ENCODE measurements at regions of chr6 and their contacts with region 1.

Region 1: DNA sequence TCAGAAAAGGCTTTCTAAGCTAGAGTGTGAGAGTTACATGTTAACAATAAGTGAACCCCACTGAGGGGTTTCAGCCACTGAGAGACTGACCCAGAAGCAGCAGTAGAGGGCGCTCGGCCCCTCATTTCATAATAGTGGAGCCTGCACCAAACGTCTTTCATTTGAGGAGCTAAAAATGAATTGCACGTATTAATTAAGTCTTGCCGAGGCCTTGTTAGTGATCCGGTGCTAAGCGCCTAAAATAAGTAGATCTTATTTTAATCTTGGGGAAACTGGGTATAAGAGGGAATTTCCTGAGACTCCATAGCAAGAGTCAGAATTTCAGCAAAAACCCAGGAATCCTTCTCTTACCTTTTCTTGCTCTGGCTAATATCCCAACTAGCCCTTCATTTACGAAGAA is 209.7 kb downstream of the FARS2 start:
- DNase-seq: peak; percentile 75
- ATAC-seq: peak; percentile 85
- H3K4me3 Mint-ChIP-seq: no peak overlapping the region
- H3K27ac Mint-ChIP-seq: no peak overlapping the region
- H3K4me1 Mint-ChIP-seq: no peaks in the 10 kb centered on the region
- H3K27me3 Mint-ChIP-seq: no peaks in the 10 kb centered on the region

Region 2: GRCh38 chr6:5435449-5435848 is 35.6 kb before region 1 on chr6:
- CTCF ChIA-PET with region 1: no interaction called
- POLR2A ChIA-PET with region 1: no interaction called
- DNase-seq: no peak
- ATAC-seq: no peak
- H3K4me3 Mint-ChIP-seq: no peak overlapping the region
- H3K27ac Mint-ChIP-seq: no peak overlapping the region
- H3K4me1 Mint-ChIP-seq: no peaks in the 10 kb centered on the region
- H3K27me3 Mint-ChIP-seq: no peaks in the 10 kb centered on the region

Region 3: DNA sequence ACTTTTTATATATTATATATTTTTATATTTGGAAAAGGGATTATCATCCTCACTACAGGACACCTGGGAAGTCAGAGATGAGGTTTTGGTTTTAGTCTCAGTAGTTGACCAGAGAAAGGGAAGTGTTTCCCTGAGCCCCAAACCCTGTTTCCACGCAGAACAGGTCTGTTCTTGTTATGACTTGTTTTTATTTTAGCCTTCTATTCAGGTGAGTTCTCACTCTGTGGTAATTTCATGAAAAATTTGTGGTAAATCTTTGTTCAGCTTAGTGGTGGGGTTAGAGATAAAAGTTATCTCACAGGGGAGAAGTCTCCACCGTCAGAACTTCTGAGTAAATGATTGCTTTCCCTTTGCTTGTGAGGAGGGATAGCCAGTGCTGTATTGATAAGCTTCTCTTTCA is 15.2 kb after region 1 on chr6:
- CTCF ChIA-PET with region 1: interaction called, 10 read pairs
- POLR2A ChIA-PET with region 1: interaction called, 3 read pairs
- DNase-seq: no peak
- ATAC-seq: no peak
- H3K4me3 Mint-ChIP-seq: no peak overlapping the region
- H3K27ac Mint-ChIP-seq: no peak overlapping the region
- H3K4me1 Mint-ChIP-seq: peaks cover 11% of the 10 kb centered on the region
- H3K27me3 Mint-ChIP-seq: no peaks in the 10 kb centered on the region

Region 4: DNA sequence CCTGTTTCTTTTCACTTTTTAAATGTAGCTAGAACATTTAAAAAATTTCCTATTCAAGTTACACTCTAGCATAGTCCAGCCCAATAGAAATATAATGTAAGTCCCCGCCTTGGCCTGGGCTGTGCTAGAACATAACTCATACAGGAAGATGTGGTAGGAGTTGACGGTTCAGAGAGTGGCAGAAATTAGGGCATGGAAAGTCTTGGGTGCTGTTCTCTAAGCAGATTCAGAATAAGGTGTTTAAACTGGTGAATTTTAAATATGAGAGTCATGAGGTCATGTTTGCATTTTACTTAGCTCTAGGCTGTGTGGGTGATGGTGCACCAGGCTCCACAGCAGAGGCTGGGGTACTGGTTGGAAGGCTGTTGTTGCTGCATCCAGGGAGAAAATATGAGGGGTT is 46.8 kb after region 1 on chr6:
- CTCF ChIA-PET with region 1: interaction called, 11 read pairs
- POLR2A ChIA-PET with region 1: no interaction called
- DNase-seq: peak; percentile 63
- ATAC-seq: peak; percentile 81
- H3K4me3 Mint-ChIP-seq: peak overlapping the region; percentile 35
- H3K27ac Mint-ChIP-seq: peak overlapping the region; percentile 78
- H3K4me1 Mint-ChIP-seq: peaks cover 45% of the 10 kb centered on the region
- H3K27me3 Mint-ChIP-seq: no peaks in the 10 kb centered on the region

Region 5: DNA sequence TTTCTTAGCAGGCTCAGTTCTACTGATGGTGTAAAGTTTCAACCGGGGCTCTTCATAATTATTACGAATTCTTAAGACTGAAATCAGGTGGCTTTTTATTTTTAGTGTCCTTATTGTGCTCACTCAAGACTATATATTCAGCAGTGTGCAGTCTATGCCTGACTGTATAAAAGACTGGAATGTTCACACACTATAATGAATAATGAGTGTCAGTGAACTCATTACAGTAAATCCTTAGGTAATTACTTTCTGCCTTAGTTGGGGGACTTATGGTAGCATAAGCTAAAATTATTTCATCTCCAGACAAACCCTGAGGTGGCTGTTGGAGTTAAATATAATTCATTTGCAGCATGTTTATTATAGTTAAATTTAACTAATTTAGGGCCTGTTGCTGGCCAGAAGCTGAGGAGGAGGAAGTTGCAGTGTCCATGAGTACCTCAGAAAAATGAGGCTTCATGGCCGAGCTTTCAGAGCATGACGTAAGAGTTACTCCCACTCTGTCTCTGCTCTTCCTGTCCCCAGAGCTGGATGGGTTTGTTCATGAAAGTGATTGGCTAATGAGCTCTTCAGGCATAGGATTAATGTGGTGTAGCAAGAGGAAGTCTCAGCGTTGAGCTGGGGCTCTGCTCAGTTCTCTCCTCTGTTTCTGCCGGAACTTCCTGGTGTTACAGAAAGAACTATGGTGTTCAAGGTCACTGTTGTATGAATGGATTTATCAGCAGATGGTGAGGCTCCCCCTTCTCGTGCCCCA is 199.9 kb after region 1 on chr6:
- CTCF ChIA-PET with region 1: interaction called, 19 read pairs
- POLR2A ChIA-PET with region 1: no interaction called
- DNase-seq: peak; percentile 50
- ATAC-seq: peak; percentile 75
- H3K4me3 Mint-ChIP-seq: peak overlapping the region; percentile 7
- H3K27ac Mint-ChIP-seq: peak overlapping the region; percentile 79
- H3K4me1 Mint-ChIP-seq: peaks cover 50% of the 10 kb centered on the region
- H3K27me3 Mint-ChIP-seq: no peaks in the 10 kb centered on the region

Region 6: GRCh38 chr6:5995949-5996713 is 525.1 kb after region 1 on chr6:
- CTCF ChIA-PET with region 1: interaction called, 10 read pairs
- POLR2A ChIA-PET with region 1: no interaction called
- DNase-seq: peak; percentile 48
- ATAC-seq: peak; percentile 32
- H3K4me3 Mint-ChIP-seq: peak overlapping the region; percentile 87
- H3K27ac Mint-ChIP-seq: peak overlapping the region; percentile 82
- H3K4me1 Mint-ChIP-seq: peaks cover 69% of the 10 kb centered on the region
- H3K27me3 Mint-ChIP-seq: peaks cover 80% of the 10 kb centered on the region

Region 7: DNA sequence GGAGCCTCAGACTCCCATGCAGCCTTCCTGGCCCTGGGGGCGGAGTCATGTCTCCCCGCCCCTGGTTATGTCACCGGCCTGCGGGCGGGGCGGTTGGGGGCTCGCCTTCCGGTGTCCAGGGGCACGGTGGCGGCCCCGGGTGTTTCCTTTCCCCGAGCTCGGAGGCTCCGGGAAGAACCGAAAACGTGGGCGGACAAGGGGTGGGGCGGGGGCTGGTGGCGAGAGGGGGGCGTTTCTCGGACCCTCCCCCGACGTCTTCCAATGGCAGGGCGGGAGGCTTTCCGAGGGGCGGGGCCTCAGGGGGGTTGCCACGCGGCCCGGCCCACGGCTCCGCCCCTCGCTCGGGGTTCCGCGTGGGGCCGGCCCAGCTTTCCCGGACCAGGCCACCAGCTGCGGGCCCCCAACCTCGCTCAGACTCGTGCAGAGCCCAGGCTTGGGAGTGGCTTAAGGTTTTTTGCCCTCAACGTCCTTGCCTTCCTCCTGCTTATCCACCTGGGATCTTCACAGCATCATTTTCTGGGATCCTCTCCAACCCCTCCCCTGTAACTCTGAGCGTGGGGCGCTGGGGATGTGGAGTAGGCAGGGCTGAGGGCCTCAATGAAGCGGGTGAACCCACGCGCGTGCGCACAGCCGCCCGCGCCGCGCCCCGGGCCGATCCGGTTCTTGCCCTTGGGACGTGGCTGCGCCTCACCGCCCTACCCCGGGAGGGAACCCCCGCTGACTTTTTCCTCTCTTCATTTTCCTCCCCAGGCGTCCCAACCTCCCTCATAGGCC is 537.8 kb after region 1 on chr6:
- CTCF ChIA-PET with region 1: interaction called, 10 read pairs
- POLR2A ChIA-PET with region 1: no interaction called
- DNase-seq: peak; percentile 76
- ATAC-seq: peak; percentile 69
- H3K4me3 Mint-ChIP-seq: peak overlapping the region; percentile 81
- H3K27ac Mint-ChIP-seq: peak overlapping the region; percentile 66
- H3K4me1 Mint-ChIP-seq: peaks cover 44% of the 10 kb centered on the region
- H3K27me3 Mint-ChIP-seq: peaks cover 66% of the 10 kb centered on the region

Measured in activated CD8-positive, alpha-beta T cell treated with anti-CD3 and anti-CD28 coated beads, Interleukin-2, amount 10 ng/mL, durations not matched to agents 7 days and 5 days (primary cell).